ENCODE measurements at regions of chr20 and their contacts with region 1.

Region 1: GRCh38 chr20:38033310-38034107 is at the starts of genes RPRD1B and TTI1:
- DNase-seq: peak; percentile 92
- H3K4me3 Mint-ChIP-seq: peak within 1 kb of the TSS; percentile 95
- H3K27ac Mint-ChIP-seq: peak within 1 kb of the TSS; percentile 97
- H3K4me1 Mint-ChIP-seq: peaks cover 73% of the 10 kb centered on the region
- H3K27me3 Mint-ChIP-seq: no peaks in the 10 kb centered on the region
- total RNA-seq, gene RPRD1B: 27.6 to 33.2 TPM
- total RNA-seq, gene TTI1: 21.7 to 23.1 TPM

Region 2: DNA sequence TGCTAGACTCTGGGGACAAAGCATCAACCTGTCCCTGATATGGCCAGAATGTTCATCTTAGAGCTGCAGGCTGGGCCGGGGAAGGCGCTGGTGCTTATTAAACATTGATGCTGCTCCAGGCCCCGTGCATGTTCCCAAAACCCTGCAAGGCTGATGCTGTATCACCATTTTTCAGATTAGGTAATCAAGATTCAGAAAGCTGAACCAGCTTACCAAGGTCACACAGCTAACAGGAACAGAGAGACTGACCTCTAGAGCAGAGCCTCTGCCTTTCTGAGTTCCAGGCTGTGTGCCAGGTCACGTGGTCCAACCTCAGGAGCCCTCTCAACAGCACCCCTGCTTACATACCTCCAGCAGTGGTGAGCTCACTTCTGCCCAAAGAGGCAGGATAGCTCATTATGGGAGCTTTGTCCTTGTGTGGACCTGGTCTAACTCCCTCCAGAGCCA is 146.6 kb before region 1 on chr20:
- CTCF ChIA-PET with region 1: no interaction called
- POLR2A ChIA-PET with region 1: no interaction called
- DNase-seq: no peak
- H3K4me3 Mint-ChIP-seq: no peak overlapping the region
- H3K27ac Mint-ChIP-seq: no peak overlapping the region
- H3K4me1 Mint-ChIP-seq: no peaks in the 10 kb centered on the region
- H3K27me3 Mint-ChIP-seq: no peaks in the 10 kb centered on the region

Region 3: DNA sequence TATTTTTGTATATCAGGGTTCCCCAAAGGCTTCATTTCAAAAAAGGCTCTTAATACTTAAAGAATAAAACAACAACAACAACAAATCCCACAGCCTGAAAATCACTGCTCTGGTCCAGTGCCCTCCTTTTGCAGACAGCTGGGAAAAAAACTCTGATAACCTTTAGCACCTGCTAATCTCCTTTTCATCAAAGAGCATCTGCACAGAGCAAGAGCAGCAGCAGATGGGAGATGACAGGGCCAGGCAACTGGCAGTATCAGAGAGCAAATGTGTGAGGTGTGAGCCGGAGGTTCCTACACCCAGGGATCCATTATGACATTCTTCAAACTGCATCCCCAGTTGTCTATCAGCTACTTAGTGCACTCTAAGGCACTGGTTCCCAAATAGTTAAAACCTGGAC is 26.0 kb before region 1 on chr20:
- CTCF ChIA-PET with region 1: no interaction called
- POLR2A ChIA-PET with region 1: interaction called, 28 read pairs
- DNase-seq: no peak
- H3K4me3 Mint-ChIP-seq: no peak overlapping the region
- H3K27ac Mint-ChIP-seq: no peak overlapping the region
- H3K4me1 Mint-ChIP-seq: peaks cover 23% of the 10 kb centered on the region
- H3K27me3 Mint-ChIP-seq: no peaks in the 10 kb centered on the region

Region 4: GRCh38 chr20:38043512-38044300 is 10.2 kb after region 1 on chr20:
- CTCF ChIA-PET with region 1: interaction called, 4 read pairs
- POLR2A ChIA-PET with region 1: interaction called, 19 read pairs
- DNase-seq: no peak
- H3K4me3 Mint-ChIP-seq: no peak overlapping the region
- H3K27ac Mint-ChIP-seq: no peak overlapping the region
- H3K4me1 Mint-ChIP-seq: peaks cover 15% of the 10 kb centered on the region
- H3K27me3 Mint-ChIP-seq: no peaks in the 10 kb centered on the region

Region 5: DNA sequence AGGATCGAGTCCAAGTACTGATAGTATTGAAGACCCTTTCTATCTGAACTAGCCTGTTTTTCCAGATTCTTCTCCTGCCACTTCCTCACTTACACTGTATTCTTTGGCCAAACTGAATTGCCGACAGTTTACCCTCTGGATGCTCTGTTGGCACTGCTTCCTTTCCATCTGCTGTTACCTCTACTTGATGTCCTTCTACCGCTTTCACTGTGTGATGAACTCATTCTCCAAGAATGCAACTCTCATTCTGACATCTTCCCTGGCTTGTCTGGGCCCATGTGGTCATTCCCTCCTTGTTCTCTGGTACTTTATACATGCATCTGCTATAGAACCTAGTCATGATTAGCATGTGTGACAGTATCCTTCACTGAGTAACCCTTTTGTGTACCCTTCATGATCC is 16.3 kb after region 1 on chr20:
- CTCF ChIA-PET with region 1: interaction called, 4 read pairs
- POLR2A ChIA-PET with region 1: interaction called, 19 read pairs
- DNase-seq: no peak
- H3K4me3 Mint-ChIP-seq: no peak overlapping the region
- H3K27ac Mint-ChIP-seq: no peak overlapping the region
- H3K4me1 Mint-ChIP-seq: peaks cover 23% of the 10 kb centered on the region
- H3K27me3 Mint-ChIP-seq: no peaks in the 10 kb centered on the region

Region 6: DNA sequence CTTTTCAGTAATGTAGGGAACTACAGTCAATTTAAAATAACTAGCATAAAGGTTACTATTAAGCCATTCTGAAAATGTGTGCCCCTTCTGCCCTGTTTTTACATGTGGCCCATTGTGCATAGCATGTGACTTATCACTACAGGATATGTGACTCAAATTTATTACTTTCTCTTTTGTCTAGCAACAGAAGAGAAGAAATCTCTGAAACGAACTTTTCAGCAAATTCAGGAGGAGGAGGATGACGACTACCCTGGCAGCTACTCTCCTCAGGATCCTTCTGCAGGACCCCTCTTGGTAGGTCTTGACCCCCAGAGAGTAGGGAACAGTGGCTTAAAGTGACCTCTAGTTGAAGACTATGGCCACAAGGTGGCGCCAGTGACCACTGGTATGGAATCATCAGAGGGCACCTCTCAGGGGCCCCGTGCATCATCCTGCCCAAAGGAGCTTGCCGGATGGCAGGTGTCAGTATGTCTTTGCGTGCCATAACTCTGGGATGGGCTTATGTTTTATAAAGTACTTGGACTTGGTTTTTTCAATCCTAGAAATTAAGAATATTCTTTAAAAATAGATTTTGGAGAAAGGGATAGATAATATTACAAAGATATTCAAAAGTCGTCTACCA is 24.0 kb after region 1 on chr20:
- CTCF ChIA-PET with region 1: interaction called, 11 read pairs
- POLR2A ChIA-PET with region 1: interaction called, 11 read pairs
- DNase-seq: peak; percentile 77
- H3K4me3 Mint-ChIP-seq: no peak overlapping the region
- H3K27ac Mint-ChIP-seq: peak overlapping the region; percentile 32
- H3K4me1 Mint-ChIP-seq: peaks cover 26% of the 10 kb centered on the region
- H3K27me3 Mint-ChIP-seq: no peaks in the 10 kb centered on the region

Region 7: DNA sequence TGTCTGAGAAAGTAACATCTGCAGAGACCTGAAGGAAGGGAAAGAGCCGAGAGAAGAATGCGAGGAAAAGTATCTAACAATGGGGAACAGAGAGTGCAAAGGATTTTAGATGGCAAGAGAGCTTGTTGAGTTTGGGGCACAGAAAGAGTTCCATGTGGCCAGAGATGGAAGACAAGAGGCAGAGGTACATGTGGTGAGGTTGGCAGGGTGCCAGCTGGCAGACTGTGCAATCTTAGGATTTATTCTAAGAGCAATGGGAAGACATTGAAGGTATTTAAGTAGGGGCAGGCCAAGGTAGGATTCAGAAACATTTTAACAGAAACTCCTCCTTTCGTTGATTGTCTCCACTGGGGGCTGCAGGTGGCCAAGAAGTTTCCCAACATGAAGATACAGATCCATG is 292.4 kb after region 1 on chr20:
- CTCF ChIA-PET with region 1: no interaction called
- POLR2A ChIA-PET with region 1: no interaction called
- DNase-seq: no peak
- H3K4me3 Mint-ChIP-seq: no peak overlapping the region
- H3K27ac Mint-ChIP-seq: no peak overlapping the region
- H3K4me1 Mint-ChIP-seq: no peaks in the 10 kb centered on the region
- H3K27me3 Mint-ChIP-seq: peaks cover 22% of the 10 kb centered on the region

Measured in activated CD4-positive, alpha-beta memory T cell treated with anti-CD3 and anti-CD28 coated beads, Interleukin-2, amount 10 ng/mL, durations not matched to agents 7 days and 5 days (primary cell).